ENCODE measurements at regions of chr5 and their contacts with region 1.

Region 1: GRCh38 chr5:146446853-146447733 is at the start of gene TCERG1:
- H3K4me3 Mint-ChIP-seq: peak within 1 kb of the TSS; percentile 84
- H3K27ac Mint-ChIP-seq: peak within 1 kb of the TSS; percentile 92
- H3K4me1 Mint-ChIP-seq: peaks cover 29% of the 10 kb centered on the region
- H3K27me3 Mint-ChIP-seq: no peaks in the 10 kb centered on the region

Region 2: DNA sequence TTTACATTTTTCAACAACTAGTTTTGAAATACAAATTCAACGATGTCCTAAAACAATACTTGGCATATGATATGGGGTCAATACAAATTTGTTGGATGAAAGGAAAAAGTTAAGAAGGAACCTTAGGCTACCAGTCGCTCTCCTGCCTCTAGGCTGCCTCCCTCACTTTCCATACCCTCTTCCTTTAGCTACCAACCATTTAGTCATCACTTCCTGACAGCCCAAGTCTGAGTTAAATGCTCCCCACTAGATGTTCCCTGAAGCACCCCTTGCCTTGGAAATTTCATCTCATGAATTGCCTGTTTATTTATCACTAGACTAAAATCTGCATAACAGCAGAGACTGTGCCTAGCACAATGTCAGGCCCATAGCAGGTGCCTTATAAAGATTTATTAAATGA is 261.9 kb before region 1 on chr5:
- intact Hi-C with region 1: loop called (anchors 1 kb)
- H3K4me3 Mint-ChIP-seq: no peak overlapping the region
- H3K27ac Mint-ChIP-seq: no peak overlapping the region
- H3K4me1 Mint-ChIP-seq: peaks cover 11% of the 10 kb centered on the region
- H3K27me3 Mint-ChIP-seq: peaks cover 2% of the 10 kb centered on the region

Region 3: GRCh38 chr5:146203011-146203871 is 243.9 kb before region 1 on chr5 and contains the start of gene RBM27:
- intact Hi-C with region 1: loop called (anchors 1 kb)
- H3K4me3 Mint-ChIP-seq: no peak within 1 kb of the TSS
- H3K27ac Mint-ChIP-seq: no peak within 1 kb of the TSS
- H3K4me1 Mint-ChIP-seq: no peaks in the 10 kb centered on the region
- H3K27me3 Mint-ChIP-seq: no peaks in the 10 kb centered on the region

Region 4: DNA sequence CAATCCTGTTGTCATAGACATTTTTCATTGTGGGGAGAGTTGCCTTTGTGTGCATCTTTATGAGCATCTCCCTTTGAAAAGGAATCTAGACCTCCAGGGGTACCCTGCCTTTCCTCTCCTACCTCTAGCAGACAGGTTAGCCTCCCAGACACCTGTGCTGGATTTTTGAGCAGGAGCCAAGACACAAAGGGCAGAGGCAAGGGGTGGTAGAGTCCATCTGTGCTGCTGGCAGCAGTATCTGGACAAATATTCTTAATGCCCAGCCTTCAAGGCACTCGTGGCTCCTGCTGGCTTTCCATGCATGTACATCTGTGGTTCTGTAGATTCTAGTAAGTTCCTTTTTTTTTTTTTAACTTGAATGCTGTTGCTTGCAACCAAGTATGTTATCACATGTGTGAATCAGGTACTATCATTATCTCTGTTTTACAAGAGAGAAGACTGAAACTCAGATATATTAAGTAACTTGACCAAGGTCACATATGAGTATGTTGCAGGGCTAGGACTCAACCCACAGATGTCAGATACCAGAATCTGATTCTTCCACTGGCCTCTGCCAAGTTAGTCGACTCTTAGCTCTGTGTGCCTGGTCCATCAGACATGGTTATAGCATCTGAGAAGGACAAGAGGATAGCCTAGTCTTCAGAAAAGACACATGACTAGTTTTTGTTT is 101.8 kb after region 1 on chr5:
- intact Hi-C with region 1: no loop called
- H3K4me3 Mint-ChIP-seq: no peak overlapping the region
- H3K27ac Mint-ChIP-seq: no peak overlapping the region
- H3K4me1 Mint-ChIP-seq: no peaks in the 10 kb centered on the region
- H3K27me3 Mint-ChIP-seq: peaks cover 4% of the 10 kb centered on the region

Region 5: GRCh38 chr5:146622391-146622790 is 175.3 kb after region 1 on chr5:
- intact Hi-C with region 1: no loop called
- H3K4me3 Mint-ChIP-seq: no peak overlapping the region
- H3K27ac Mint-ChIP-seq: no peak overlapping the region
- H3K4me1 Mint-ChIP-seq: no peaks in the 10 kb centered on the region
- H3K27me3 Mint-ChIP-seq: no peaks in the 10 kb centered on the region